ENCODE measurements at regions of chr16 and their contacts with region 1.

Region 1: DNA sequence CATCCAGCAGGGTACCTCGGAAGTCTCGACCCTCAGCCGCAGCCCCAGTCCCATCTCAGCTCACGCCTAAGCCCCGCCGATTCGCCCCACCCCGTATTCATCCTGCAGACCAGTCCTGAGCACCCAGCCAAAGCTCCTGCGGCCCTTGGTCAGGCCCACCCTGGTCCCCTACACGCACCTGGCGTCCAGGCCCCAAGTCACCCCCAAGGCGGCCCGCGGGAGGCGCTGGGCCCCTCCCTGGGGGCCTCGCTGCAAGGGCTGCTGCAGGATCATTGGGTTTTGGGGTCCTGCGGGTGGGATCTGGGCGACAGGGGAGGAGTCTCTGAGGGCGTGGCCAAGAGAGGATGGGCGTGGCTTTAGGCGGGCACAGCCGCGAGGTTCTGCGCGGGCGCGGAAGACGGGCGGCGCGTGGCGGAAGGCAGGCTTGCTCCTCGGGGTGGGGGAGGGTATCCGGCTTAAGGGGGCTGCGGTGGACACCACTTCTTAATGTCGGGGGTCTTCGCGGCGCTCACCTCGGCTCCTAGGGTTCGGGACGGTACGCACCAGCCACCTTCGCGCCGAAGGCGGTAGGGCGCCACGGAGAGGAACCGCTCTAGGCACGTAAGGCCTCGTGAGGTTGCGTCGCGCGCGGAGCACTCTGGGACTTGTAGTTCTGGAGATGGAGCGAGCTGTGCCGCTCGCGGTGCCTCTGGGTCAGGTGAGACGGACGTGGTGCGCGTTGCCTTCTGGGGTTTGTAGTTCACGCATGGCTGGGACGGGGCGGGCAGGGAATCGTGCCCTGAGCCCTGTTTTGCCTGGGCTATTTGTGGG is at the starts of genes HCFC1R1 and THOC6:
- DNase-seq: peak; percentile 98
- ATAC-seq: peak; percentile 52
- H3K4me3 ChIP-seq: peak within 1 kb of the TSS; percentile 94 to 95
- H3K27ac ChIP-seq: peak within 1 kb of the TSS; percentile 100
- H3K4me1 ChIP-seq: peaks cover 22 to 64% of the 10 kb centered on the region in 2 experiments
- H3K27me3 ChIP-seq: no peaks in the 10 kb centered on the region
- CTCF ChIP-seq: no peak
- POLR2A ChIP-seq: peak; percentile 61
- RAD21 ChIP-seq: no peak
- total RNA-seq, gene HCFC1R1: 60.0 TPM
- total RNA-seq, gene THOC6: 62.9 TPM

Region 2: DNA sequence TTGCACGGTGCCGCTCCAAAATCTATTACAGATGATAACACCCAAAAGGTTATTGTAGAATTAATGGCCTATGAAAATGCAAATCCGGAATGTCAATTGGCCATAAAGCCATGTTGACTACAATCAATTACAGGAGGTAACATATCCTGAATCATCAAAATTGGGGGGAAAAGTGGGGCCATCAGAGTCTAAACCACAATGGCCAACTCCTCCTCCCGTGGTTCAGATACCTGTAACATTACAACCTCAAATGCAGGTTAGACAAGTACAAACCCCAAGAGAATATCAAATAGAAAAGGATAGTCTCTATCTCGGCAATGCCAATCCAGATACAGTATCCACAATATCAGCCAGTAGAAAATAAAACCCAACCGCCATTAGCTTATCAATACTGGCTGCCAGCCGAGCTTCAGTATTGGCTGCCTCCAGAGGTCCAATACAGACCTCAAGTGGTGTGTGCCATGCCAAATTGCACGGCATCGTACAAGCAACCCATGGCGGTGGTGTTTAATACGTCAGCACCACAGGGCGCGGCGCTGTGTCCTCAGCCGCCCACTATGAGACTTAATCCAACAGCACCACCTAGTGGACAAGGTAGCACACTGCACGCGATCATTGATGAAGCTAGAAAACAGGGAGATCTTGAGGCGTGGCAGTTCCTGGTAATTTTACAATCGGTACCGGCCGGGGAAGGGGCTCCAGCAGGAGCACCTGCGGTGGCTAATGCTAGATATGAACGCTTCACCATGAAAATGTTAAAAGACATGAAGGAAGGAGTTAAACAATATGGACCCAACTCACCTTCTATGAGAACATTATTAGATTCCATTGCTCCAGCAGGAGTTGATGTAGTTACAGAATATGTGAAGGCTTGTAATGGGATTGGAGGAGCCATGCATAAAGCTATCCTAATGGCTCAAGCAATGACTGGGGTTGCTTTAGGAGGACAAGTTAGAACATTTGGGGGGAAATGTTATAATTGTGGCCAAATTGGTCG is 96.9 kb before region 1 on chr16:
- CTCF ChIA-PET with region 1: no interaction called
- POLR2A ChIA-PET with region 1: no interaction called
- RAD21 ChIA-PET with region 1: no interaction called
- intact Hi-C with region 1: no loop called
- DNase-seq: peak; percentile 85
- ATAC-seq: peak; percentile 96
- H3K4me3 ChIP-seq: no peak overlapping the region
- H3K27ac ChIP-seq: no peak overlapping the region
- H3K4me1 ChIP-seq: peaks cover 0 to 11% of the 10 kb centered on the region in 2 experiments; a peak in 3 of 4 replicates
- H3K27me3 ChIP-seq: no peaks in the 10 kb centered on the region
- CTCF ChIP-seq: peak; percentile 93 to 98 (median 97)
- POLR2A ChIP-seq: no peak
- RAD21 ChIP-seq: peak; percentile 87

Region 3: GRCh38 chr16:2968738-2969544 is 54.9 kb before region 1 on chr16 and contains the start of gene PAQR4:
- CTCF ChIA-PET with region 1: interaction called, 6 read pairs
- POLR2A ChIA-PET with region 1: interaction called, 29 read pairs
- RAD21 ChIA-PET with region 1: no interaction called
- intact Hi-C with region 1: no loop called
- DNase-seq: peak; percentile 82
- ATAC-seq: peak; percentile 67
- H3K4me3 ChIP-seq: peak within 1 kb of the TSS; percentile 66 to 79
- H3K27ac ChIP-seq: peak within 1 kb of the TSS; percentile 95
- H3K4me1 ChIP-seq: peaks cover 19 to 56% of the 10 kb centered on the region in 2 experiments
- H3K27me3 ChIP-seq: no peaks in the 10 kb centered on the region
- CTCF ChIP-seq: no peak
- POLR2A ChIP-seq: peak; percentile 25
- RAD21 ChIP-seq: no peak
- total RNA-seq, gene PAQR4: 45.6 TPM

Region 4: DNA sequence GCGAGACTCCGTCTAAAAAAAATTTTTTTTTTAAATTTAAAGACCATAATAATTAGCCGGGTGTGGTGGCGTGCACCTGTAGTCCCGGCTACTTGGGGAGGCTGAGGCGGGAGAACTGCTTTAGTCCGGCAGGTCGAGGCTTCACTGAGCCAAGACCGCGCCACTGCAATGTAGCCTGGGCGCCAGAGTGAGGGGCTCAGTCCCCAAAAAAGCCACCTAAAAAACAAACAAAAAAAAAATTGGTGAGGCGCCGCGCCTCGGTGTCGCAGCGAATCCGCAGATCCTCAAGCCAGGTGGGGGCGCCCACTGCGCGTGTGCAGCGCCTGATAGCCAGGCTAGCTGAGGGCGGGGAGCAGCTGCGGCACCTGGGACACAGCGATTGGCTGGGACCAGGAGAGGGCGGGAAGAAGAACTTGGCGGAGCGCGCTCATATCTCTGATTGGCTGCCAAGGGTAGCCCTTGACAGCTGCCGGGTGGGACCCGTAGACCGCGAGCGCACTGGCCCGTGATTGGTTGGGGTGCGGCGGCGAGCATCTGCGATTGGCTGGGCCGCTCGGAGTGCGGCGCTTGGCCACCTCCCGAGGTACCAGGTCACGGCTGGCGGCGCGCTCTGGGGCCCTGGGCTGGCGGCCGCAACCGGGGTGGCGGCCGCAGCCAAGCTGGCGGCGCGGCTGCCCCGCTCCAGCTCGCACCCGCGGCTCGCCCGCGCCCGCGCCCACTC is 20.1 kb before region 1 on chr16:
- CTCF ChIA-PET with region 1: interaction called, 29 read pairs
- POLR2A ChIA-PET with region 1: interaction called, 188 read pairs
- RAD21 ChIA-PET with region 1: interaction called, 7 to 8 read pairs
- intact Hi-C with region 1: loop called (anchors 2 kb)
- DNase-seq: peak; percentile 99
- ATAC-seq: peak; percentile 93
- H3K4me3 ChIP-seq: 0 out of 4 replicates have a peak overlapping the region, but pooled peaks of 1 of the 2 experiments have one; percentile 18
- H3K27ac ChIP-seq: no peak overlapping the region
- H3K4me1 ChIP-seq: peaks cover 23 to 47% of the 10 kb centered on the region in 2 experiments
- H3K27me3 ChIP-seq: no peaks in the 10 kb centered on the region
- CTCF ChIP-seq: peak in 2 of 3 experiments; percentile 43 to 52; a peak in 3 of 6 replicates
- POLR2A ChIP-seq: no peak
- RAD21 ChIP-seq: no peak

Region 5: GRCh38 chr16:3038256-3038655 is 14.4 kb after region 1 on chr16:
- CTCF ChIA-PET with region 1: interaction called, 39 read pairs
- POLR2A ChIA-PET with region 1: interaction called, 16 read pairs
- RAD21 ChIA-PET with region 1: no interaction called
- intact Hi-C with region 1: no loop called
- DNase-seq: no peak
- ATAC-seq: no peak
- H3K4me3 ChIP-seq: no peak overlapping the region
- H3K27ac ChIP-seq: no peak overlapping the region
- H3K4me1 ChIP-seq: peaks cover 24 to 59% of the 10 kb centered on the region in 2 experiments
- H3K27me3 ChIP-seq: no peaks in the 10 kb centered on the region
- CTCF ChIP-seq: no peak
- POLR2A ChIP-seq: no peak
- RAD21 ChIP-seq: no peak

Region 6: GRCh38 chr16:3129137-3130131 is 105.6 kb after region 1 on chr16:
- CTCF ChIA-PET with region 1: interaction called, 11 read pairs
- POLR2A ChIA-PET with region 1: interaction called, 4 read pairs
- RAD21 ChIA-PET with region 1: no interaction called
- intact Hi-C with region 1: no loop called
- DNase-seq: no peak
- ATAC-seq: peak; percentile 70
- H3K4me3 ChIP-seq: peak overlapping the region; percentile 39 to 46
- H3K27ac ChIP-seq: peak overlapping the region; percentile 82
- H3K4me1 ChIP-seq: peaks cover 19 to 34% of the 10 kb centered on the region in 2 experiments
- H3K27me3 ChIP-seq: no peaks in the 10 kb centered on the region
- CTCF ChIP-seq: peak; percentile 89 to 97 (median 91)
- POLR2A ChIP-seq: no peak
- RAD21 ChIP-seq: peak; percentile 72